Activated CD8-positive, alpha-beta T cell treated with anti-CD3 and anti-CD28 coated beads, Interleukin-2, amount 10 ng/mL, durations not matched to agents 7 days and 5 days (primary cell): ENCODE measurements at regions of chr5 and their contacts with region 1.

Region 1: DNA sequence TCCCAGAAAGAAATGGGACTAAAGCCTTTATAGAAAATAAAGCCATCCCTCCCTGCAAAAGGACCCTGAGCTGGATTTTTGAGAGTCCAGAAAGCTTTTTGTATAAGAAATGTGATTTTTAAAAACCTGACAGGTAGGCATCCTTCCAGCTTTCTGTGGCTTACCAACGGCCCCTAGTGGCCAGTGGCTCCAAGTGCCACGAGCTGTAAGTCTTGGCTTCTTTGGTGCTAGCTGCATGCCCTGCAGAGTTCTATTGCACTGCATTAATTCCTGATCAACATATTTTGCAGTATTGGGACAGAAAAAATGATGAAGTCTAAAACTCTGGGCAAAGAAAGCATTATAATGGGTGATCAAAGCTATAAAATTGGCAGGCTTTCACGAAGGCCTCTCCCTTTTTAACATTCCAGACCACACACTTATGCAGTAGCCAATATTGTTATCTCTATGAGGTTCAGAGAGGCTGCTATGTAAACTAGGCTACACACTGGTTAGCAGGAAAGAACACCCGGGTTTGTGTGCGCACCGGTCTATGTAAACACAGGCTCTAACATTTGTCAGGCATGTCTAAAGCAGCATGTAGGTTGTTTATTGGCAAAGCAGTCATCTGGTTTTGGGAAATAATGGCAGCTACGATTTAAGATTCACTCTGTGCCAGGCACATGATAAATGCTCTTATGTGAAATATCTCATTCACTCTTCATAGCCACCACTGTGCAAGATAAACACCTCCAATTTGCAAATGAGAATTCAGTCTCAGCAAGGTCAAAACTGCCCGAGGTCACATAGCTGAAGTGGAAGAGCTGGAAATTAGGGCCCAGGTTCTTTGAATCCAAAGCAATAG is 55.2 kb downstream of the NMUR2 start:
- DNase-seq: peak; percentile 35
- ATAC-seq: peak; percentile 55
- H3K4me3 Mint-ChIP-seq: no peak overlapping the region
- H3K27ac Mint-ChIP-seq: no peak overlapping the region
- H3K4me1 Mint-ChIP-seq: no peaks in the 10 kb centered on the region
- H3K27me3 Mint-ChIP-seq: no peaks in the 10 kb centered on the region

Region 2: DNA sequence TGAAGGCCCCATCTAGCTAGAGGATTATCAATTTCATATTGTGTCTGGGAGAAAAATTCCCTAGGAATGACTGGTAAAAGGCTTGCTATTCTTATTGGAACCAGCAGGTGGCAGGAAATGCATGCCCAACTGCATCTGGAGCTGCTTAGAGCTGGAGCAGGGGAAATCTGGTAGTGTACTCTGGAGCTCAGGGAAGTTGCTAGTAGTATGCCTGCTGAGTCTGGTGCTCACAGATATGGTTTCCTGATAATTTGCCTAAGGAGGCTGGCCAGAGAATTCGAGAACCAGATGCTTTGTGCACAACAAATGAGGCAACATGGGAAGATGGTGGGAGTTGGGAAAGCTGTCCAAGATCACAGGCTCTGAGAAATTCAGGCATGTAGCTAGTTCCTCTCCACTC is 524.5 kb before region 1 on chr5:
- CTCF ChIA-PET with region 1: interaction called, 25 read pairs
- POLR2A ChIA-PET with region 1: interaction called, 3 read pairs
- DNase-seq: peak; percentile 50
- ATAC-seq: no peak
- H3K4me3 Mint-ChIP-seq: no peak overlapping the region
- H3K27ac Mint-ChIP-seq: no peak overlapping the region
- H3K4me1 Mint-ChIP-seq: no peaks in the 10 kb centered on the region
- H3K27me3 Mint-ChIP-seq: no peaks in the 10 kb centered on the region

Region 3: GRCh38 chr5:152142840-152143469 is 206.9 kb before region 1 on chr5:
- CTCF ChIA-PET with region 1: interaction called, 11 read pairs
- POLR2A ChIA-PET with region 1: no interaction called
- DNase-seq: peak; percentile 71
- ATAC-seq: peak; percentile 69
- H3K4me3 Mint-ChIP-seq: no peak overlapping the region
- H3K27ac Mint-ChIP-seq: no peak overlapping the region
- H3K4me1 Mint-ChIP-seq: no peaks in the 10 kb centered on the region
- H3K27me3 Mint-ChIP-seq: peaks cover 4% of the 10 kb centered on the region

Region 4: DNA sequence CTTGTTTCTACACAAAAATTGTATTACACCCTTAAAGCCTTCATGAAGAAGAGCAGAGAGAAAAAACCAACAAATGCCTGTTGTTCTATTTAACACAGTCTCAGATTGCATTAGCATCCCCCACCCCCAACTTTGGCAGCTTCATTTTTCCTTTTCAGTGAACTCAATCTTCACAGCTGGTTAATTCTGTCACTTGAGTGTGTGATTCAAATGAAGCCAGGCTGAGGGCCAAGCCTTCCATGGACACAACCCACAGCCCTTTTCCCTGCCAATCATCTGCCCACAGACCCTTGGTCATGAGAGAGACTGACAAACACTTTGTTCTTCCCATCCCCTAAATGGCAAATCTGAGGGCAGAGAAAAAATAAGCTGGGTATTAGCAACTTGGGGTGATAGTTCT is 272.7 kb after region 1 on chr5:
- CTCF ChIA-PET with region 1: no interaction called
- POLR2A ChIA-PET with region 1: no interaction called
- DNase-seq: no peak
- ATAC-seq: no peak
- H3K4me3 Mint-ChIP-seq: no peak overlapping the region
- H3K27ac Mint-ChIP-seq: no peak overlapping the region
- H3K4me1 Mint-ChIP-seq: no peaks in the 10 kb centered on the region
- H3K27me3 Mint-ChIP-seq: no peaks in the 10 kb centered on the region